Sigmoid colon (tissue), 7 donors: ENCODE measurements at regions of chr1 and their contacts with region 1.

Region 1: DNA sequence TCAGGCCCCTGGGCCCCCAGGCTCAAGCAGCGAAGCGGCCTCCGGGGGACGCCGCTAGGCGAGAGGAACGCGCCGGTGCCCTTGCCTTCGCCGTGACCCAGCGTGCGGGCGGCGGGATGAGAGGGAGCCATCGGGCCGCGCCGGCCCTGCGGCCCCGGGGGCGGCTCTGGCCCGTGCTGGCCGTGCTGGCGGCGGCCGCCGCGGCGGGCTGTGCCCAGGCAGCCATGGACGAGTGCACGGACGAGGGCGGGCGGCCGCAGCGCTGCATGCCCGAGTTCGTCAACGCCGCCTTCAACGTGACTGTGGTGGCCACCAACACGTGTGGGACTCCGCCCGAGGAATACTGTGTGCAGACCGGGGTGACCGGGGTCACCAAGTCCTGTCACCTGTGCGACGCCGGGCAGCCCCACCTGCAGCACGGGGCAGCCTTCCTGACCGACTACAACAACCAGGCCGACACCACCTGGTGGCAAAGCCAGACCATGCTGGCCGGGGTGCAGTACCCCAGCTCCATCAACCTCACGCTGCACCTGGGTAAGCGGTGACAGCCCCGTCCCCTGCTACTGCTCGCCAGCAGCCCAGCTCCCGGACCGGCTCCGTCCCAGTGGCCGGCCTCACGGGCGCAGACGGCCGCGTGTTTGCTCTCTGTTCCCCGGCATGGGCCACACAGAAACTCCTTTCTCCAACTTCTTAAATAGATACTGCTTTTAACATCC is 539 bp downstream of the LAMC1 start:
- DNase-seq: peak; percentile 81
- H3K4me3 ChIP-seq: peak overlapping the region; percentile 86 to 97 (median 90)
- H3K27ac ChIP-seq: peak overlapping the region; percentile 100
- H3K4me1 ChIP-seq: peaks cover 0 to 41% (median 30%) of the 10 kb centered on the region in 4 donors
- H3K27me3 ChIP-seq: no peaks in the 10 kb centered on the region
- CTCF ChIP-seq: peak in 3 of 4 experiments; percentile 48 to 65 (median 63)
- EP300 ChIP-seq: no peak
- POLR2A ChIP-seq: no peak

Region 2: GRCh38 chr1:183090391-183091006 is 66.7 kb after region 1 on chr1:
- intact Hi-C with region 1: loop called (anchors 5 kb)
- DNase-seq: peak; percentile 94
- H3K4me3 ChIP-seq: no peak overlapping the region
- H3K27ac ChIP-seq: peak overlapping the region; percentile 61 to 84 (median 80)
- H3K4me1 ChIP-seq: peaks cover 0 to 88% (median 80%) of the 10 kb centered on the region in 4 donors
- H3K27me3 ChIP-seq: no peaks in the 10 kb centered on the region
- CTCF ChIP-seq: no peak
- EP300 ChIP-seq: peak in 2 of 4 donors; percentile 70 to 86
- POLR2A ChIP-seq: no peak

Region 3: DNA sequence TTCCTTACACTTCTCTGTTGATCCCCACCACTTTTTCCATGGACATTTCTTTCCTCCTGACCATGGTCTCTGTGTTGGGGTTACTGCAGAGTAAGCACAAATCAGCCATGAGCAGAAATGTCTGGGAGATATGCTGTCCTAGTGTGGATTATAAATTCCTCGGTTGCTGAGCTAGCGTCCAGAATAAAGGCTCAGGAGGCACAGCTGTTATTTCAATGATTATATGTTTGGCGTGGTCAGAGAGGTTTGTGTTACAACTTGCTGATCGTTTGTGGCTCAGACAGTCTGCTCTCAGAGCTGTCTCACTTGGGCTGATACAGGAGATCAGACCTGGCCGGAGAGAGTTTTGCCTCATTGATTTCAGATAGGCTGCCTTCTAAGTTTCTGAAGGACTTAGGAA is 124.8 kb after region 1 on chr1:
- intact Hi-C with region 1: loop called (anchors 5 kb)
- DNase-seq: no peak
- H3K4me3 ChIP-seq: no peak overlapping the region
- H3K27ac ChIP-seq: peak overlapping the region; percentile 34 to 70 (median 54)
- H3K4me1 ChIP-seq: peaks cover 0 to 15% (median 10%) of the 10 kb centered on the region in 4 donors
- H3K27me3 ChIP-seq: no peaks in the 10 kb centered on the region
- CTCF ChIP-seq: no peak
- EP300 ChIP-seq: no peak
- POLR2A ChIP-seq: no peak

Region 4: DNA sequence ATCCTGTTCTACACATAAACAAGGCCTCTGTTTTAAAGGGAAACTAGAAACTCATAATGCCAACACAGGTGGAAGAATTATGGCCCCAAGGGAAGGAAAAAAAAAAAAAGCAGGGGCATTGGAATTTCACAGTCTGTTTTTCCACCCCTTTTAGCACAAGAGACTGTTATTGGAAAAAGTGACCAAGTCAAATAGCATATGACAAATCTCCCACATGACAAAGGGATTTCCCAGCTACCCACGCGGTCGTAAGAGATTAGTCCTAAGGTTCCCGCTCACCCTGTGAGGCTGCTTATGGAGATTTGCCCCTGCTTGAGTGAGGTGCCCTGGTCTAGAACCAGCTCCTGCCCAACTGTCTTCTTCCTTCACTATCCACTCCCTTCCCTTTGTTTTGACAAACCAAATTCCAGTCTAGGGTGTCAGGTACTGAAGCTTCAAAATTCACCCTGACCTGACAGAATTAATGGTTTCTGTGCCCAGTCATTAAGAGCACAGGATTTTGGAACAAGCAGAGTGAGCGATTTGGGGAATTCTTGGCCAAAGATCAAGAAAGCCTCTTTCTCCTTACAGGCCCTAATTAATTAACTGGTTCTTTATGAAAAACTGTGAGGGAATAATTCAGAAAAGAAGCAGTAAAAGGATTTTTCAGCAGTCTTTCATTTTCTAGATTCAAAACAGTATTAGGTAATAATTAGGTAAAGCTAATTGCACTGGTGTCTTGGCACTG is 287.2 kb after region 1 on chr1:
- intact Hi-C with region 1: loop called (anchors 5 kb)
- DNase-seq: no peak
- H3K4me3 ChIP-seq: no peak overlapping the region
- H3K27ac ChIP-seq: peak overlapping the region; percentile 66 to 81 (median 73)
- H3K4me1 ChIP-seq: peaks cover 0 to 62% (median 32%) of the 10 kb centered on the region in 4 donors
- H3K27me3 ChIP-seq: no peaks in the 10 kb centered on the region
- CTCF ChIP-seq: no peak
- EP300 ChIP-seq: peak in 1 of 4 donors; percentile 14
- POLR2A ChIP-seq: no peak